Activated naive CD4-positive, alpha-beta T cell treated with anti-CD3 and anti-CD28 coated beads for 36 hours (primary cell): ENCODE measurements at regions of chr7 and their contacts with region 1.

Region 1: GRCh38 chr7:48299580-48300169 is 128.4 kb downstream of the ABCA13 start:
- DNase-seq: peak; percentile 75
- H3K4me3 Mint-ChIP-seq: no peak overlapping the region
- H3K27ac Mint-ChIP-seq: no peak overlapping the region
- H3K4me1 Mint-ChIP-seq: peaks cover 4% of the 10 kb centered on the region
- H3K27me3 Mint-ChIP-seq: peaks cover 8% of the 10 kb centered on the region

Region 2: DNA sequence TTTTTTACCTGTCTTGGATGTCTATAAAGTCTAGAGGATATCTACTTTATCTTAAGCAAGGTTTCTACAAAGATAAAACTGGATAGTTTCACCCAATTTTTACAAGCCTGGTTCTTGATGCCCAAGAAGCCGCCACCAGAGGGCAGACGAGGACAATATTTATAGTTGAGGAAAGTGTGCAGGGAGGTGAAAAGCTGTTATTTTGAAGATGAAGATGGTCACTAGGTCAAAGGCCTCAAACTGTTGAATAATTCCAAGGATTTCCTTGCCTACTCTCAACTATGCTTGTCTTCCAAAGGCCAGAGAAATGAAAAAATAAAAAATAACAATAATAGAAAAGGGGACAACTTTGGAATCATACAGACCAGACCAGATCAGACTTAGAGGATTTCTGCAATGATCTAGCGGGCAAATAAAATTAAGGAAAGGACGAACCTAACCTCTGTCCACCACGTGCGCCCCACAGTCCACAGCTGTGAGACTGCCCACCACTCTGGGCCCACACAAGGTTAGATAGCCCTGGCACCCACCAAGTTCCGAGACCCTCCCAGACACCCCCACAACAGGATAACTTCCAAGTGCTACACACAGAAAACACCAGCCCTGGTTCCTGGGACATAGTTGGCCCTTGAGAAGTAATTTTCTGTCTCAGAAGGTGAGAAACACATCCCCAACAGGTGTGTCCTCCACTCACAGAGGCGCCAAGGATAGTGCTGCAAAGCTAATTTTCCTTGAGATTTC is 354.2 kb before region 1 on chr7:
- CTCF ChIA-PET with region 1: interaction called, 4 read pairs
- intact Hi-C with region 1: loop called (anchors 10 kb)
- DNase-seq: peak; percentile 88
- H3K4me3 Mint-ChIP-seq: no peak overlapping the region
- H3K27ac Mint-ChIP-seq: no peak overlapping the region
- H3K4me1 Mint-ChIP-seq: no peaks in the 10 kb centered on the region
- H3K27me3 Mint-ChIP-seq: no peaks in the 10 kb centered on the region

Region 3: DNA sequence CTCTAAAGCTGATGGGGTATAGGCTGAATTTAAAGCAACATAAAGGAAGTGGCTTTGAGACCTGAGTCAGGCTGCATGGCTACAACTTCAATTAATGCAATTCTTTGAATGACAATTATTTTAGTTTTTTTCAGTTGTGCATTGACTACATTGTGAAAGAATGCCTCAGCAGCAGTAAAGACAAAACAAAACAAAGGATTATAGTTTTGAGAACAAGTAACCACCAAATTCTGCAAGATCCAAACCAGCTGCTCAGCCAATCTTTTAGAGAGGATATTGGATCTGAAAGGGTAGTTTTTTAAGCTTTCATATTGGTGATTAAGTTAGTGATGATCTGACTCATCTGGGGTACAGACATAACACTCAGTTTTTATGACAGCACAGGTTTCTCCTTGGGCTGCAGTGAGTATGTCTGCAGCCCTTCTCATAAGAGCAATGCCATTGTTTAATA is 169.0 kb before region 1 on chr7:
- CTCF ChIA-PET with region 1: no interaction called
- intact Hi-C with region 1: loop called (anchors 2 kb)
- DNase-seq: no peak
- H3K4me3 Mint-ChIP-seq: no peak overlapping the region
- H3K27ac Mint-ChIP-seq: no peak overlapping the region
- H3K4me1 Mint-ChIP-seq: peaks cover 6% of the 10 kb centered on the region
- H3K27me3 Mint-ChIP-seq: peaks cover 11% of the 10 kb centered on the region

Region 4: DNA sequence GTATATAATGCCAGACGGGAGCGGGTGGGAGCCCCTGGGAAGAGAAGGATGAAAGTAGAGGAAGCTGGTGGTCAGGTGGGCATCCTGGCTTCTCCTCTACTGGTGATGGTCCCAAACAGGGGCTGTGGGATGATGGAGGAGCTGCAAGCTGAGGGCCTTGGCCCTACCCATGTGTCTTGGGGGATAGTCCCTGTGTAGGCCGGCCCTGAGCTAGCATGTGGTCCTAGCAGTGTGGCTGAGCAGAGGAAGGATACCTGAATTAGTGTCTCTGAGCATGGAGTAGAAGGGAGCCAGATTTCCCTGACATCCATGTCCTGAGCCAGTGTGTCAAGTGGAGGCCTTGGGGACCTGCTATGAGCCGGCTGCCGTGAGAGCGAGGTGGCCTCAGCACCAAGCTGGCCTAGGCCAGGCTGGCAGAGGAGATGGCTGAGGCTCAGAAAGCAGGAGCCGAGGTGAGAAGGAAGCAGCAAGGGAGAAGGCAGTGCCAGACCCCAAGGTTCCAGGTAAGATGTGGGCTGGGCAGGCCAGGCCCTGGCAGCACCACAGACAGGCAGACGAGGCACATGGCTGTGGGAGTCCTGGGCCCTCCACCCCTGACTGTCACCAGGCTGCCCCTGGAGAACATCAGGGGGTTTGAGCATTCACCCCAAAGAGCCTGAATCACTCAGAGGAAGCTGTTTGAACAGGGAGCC is 21.8 kb after region 1 on chr7:
- CTCF ChIA-PET with region 1: no interaction called
- intact Hi-C with region 1: no loop called
- DNase-seq: no peak
- H3K4me3 Mint-ChIP-seq: no peak overlapping the region
- H3K27ac Mint-ChIP-seq: no peak overlapping the region
- H3K4me1 Mint-ChIP-seq: no peaks in the 10 kb centered on the region
- H3K27me3 Mint-ChIP-seq: no peaks in the 10 kb centered on the region

Region 5: DNA sequence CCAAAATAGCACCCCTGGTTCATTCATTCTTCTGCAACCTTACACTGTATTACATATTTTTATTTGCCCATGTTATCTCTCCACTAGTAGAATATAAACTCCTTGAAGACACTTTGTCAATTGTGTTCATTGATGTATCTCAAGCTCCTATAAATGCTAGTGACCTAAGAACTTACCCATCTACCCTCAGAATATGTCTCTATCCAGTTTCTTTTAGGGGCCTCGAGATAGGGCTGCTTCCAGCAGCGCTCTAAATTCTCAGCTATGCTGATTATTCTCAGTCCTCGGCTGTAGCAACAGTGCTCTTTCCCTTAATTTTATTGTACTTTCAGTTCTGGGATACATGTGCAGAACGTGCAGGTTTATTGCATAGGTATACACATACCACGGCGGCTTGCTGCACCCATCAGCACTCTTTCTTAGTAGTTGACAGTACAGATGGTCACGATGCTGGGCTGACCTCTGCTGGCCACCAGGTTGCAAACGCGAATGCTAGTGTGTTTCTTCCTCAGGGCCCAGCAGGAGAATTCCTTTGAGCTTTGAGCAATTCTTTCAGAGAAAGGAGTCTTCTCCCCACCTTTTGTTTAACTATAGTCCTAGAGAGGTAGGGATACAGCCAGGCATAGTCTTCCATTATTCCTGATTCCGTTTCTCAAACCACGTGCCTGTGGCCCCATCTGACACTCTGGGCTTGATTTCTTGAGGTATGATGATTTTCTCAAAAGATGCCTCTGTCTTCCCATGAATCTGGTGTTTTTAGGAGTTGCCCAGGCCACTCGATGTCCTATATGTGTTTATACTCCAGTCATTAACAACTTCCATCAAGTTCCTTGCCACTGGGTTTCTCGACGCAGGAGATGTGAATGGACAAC is 575.6 kb after region 1 on chr7:
- CTCF ChIA-PET with region 1: no interaction called
- intact Hi-C with region 1: loop called (anchors 1 kb)
- DNase-seq: peak; percentile 12
- H3K4me3 Mint-ChIP-seq: no peak overlapping the region
- H3K27ac Mint-ChIP-seq: no peak overlapping the region
- H3K4me1 Mint-ChIP-seq: no peaks in the 10 kb centered on the region
- H3K27me3 Mint-ChIP-seq: peaks cover under 1% of the 10 kb centered on the region

Region 6: GRCh38 chr7:49791088-49791741 is 1491.5 kb after region 1 on chr7:
- CTCF ChIA-PET with region 1: no interaction called
- intact Hi-C with region 1: loop called (anchors 5 kb)
- DNase-seq: peak; percentile 39
- H3K4me3 Mint-ChIP-seq: no peak overlapping the region
- H3K27ac Mint-ChIP-seq: no peak overlapping the region
- H3K4me1 Mint-ChIP-seq: no peaks in the 10 kb centered on the region
- H3K27me3 Mint-ChIP-seq: peaks cover 2% of the 10 kb centered on the region